GM12878 (cell line): ENCODE measurements at regions of chr12 and their contacts with region 1.

Region 1: DNA sequence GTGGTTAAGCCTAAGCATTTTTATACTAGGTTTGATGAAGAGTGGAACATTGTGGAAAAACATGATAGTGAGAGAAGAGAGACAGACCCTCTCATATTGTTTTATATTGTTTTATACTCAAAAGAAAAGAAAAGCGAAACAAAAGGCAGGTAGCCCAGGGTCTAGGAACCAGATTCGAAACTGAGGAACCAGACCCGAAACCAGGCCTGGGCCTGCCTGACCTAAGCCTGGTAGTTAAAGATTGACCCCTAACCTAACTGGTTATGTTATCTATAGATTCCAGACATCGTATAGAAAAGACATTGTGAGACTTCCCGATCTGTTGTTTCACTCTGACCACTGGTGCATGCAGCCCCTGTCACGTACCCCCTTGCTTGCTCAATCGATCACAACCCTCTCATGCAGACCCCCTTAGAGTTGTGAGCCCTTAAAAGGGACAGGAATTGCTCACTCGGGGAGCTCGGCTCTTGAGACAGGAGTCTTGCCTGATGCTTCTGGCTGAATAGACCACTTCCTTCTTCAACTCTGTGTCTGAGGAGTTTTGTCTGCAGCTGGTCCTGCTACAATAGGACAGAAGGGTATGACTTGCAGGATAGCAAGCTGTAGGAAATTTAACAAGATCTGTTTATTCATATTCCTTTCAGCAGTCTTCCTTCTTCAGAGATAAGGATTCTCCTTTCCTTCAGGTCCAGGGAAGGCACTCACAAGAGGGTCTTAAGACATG is 147.1 kb upstream of the PLEKHA5 start:
- DNase-seq: no peak
- ATAC-seq: peak; percentile 83
- H3K4me3 ChIP-seq: no peak overlapping the region
- H3K27ac ChIP-seq: no peak overlapping the region
- H3K4me1 ChIP-seq: no peaks in the 10 kb centered on the region
- H3K27me3 ChIP-seq: no peaks in the 10 kb centered on the region
- CTCF ChIP-seq: no peak
- EP300 ChIP-seq: no peak
- POLR2A ChIP-seq: no peak
- RAD21 ChIP-seq: no peak

Region 2: DNA sequence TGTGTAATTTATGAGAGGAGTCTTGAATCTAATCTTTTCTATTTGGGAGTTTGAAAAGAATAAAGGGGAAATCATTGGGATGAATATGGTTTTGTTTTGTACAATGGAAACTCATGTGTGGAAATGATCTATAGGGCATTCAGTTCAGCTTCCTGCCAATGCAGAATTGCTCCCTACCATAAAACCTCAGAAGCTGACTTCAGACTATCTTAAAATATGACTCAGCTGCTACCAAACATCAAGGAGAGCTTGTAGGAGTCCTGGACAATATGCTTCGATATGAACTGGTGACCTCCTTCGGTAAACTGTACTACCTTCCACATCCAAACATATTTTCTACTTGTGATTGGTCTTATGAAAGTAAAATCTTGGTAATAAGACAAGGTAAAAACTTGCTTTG is 83.9 kb before region 1 on chr12:
- CTCF ChIA-PET with region 1: no interaction called
- POLR2A ChIA-PET with region 1: interaction called, 13 read pairs
- RAD21 ChIA-PET with region 1: no interaction called
- SMC1A ChIA-PET with region 1: no interaction called
- in situ Hi-C with region 1: no loop called
- intact Hi-C with region 1: no loop called
- DNase-seq: no peak
- ATAC-seq: no peak
- H3K4me3 ChIP-seq: no peak overlapping the region
- H3K27ac ChIP-seq: no peak overlapping the region
- H3K4me1 ChIP-seq: no peaks in the 10 kb centered on the region
- H3K27me3 ChIP-seq: no peaks in the 10 kb centered on the region
- CTCF ChIP-seq: no peak
- EP300 ChIP-seq: no peak
- POLR2A ChIP-seq: no peak
- RAD21 ChIP-seq: no peak

Region 3: GRCh38 chr12:18998343-18999261 is 16.2 kb after region 1 on chr12:
- CTCF ChIA-PET with region 1: no interaction called
- POLR2A ChIA-PET with region 1: no interaction called
- RAD21 ChIA-PET with region 1: no interaction called
- SMC1A ChIA-PET with region 1: no interaction called
- in situ Hi-C with region 1: no loop called
- intact Hi-C with region 1: no loop called
- DNase-seq: no peak
- ATAC-seq: no peak
- H3K4me3 ChIP-seq: no peak overlapping the region
- H3K27ac ChIP-seq: no peak overlapping the region
- H3K4me1 ChIP-seq: no peaks in the 10 kb centered on the region
- H3K27me3 ChIP-seq: no peaks in the 10 kb centered on the region
- CTCF ChIP-seq: no peak
- EP300 ChIP-seq: no peak
- POLR2A ChIP-seq: no peak
- RAD21 ChIP-seq: no peak

Region 4: GRCh38 chr12:19018302-19018970 is 36.0 kb after region 1 on chr12:
- CTCF ChIA-PET with region 1: no interaction called
- POLR2A ChIA-PET with region 1: no interaction called
- RAD21 ChIA-PET with region 1: no interaction called
- SMC1A ChIA-PET with region 1: no interaction called
- in situ Hi-C with region 1: no loop called
- intact Hi-C with region 1: no loop called
- DNase-seq: no peak
- ATAC-seq: no peak
- H3K4me3 ChIP-seq: no peak overlapping the region
- H3K27ac ChIP-seq: no peak overlapping the region
- H3K4me1 ChIP-seq: no peaks in the 10 kb centered on the region
- H3K27me3 ChIP-seq: no peaks in the 10 kb centered on the region
- CTCF ChIP-seq: no peak
- EP300 ChIP-seq: no peak
- POLR2A ChIP-seq: no peak
- RAD21 ChIP-seq: no peak